Tibial artery (tissue), 4 donors: ENCODE measurements at regions of chr3 and their contacts with region 1.

Region 1: DNA sequence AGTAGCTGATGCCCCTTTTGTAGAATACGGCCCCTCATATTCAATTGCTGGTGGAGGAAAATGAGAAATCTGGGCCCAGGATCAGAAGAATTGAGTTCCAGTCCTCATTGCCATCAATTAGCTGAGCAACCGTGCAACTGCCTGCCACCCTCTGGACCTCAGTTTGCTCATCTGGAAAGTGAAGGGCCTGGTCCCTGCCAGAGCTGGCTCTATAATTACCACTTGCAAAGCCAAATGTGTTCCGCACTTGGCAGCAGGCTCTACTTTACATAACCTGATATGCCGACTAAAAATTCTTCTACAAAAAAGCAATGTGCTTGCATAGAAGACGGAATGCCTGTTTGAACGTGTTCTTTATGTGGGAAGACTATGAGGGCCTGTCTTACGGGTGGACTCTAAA is 8.6 kb upstream of the ITGB5 start:
- DNase-seq: peak in 1 of 2 donors; percentile 29
- H3K4me3 ChIP-seq: no peak overlapping the region
- H3K27ac ChIP-seq: peak overlapping the region; percentile 71 to 85
- H3K4me1 ChIP-seq: peaks cover 0 to 30% (median 15%) of the 10 kb centered on the region in 4 donors
- H3K27me3 ChIP-seq: no peaks in the 10 kb centered on the region
- CTCF ChIP-seq: no peak

Region 2: GRCh38 chr3:124780761-124781475 is 114.8 kb before region 1 on chr3:
- intact Hi-C with region 1: loop called (anchors 5 kb)
- DNase-seq: peak; percentile 89 to 93
- H3K4me3 ChIP-seq: peak overlapping the region; percentile 8 to 18
- H3K27ac ChIP-seq: peak overlapping the region; percentile 93 to 96
- H3K4me1 ChIP-seq: peaks cover 0 to 90% (median 72%) of the 10 kb centered on the region in 4 donors
- H3K27me3 ChIP-seq: no peaks in the 10 kb centered on the region
- CTCF ChIP-seq: no peak

Region 3: DNA sequence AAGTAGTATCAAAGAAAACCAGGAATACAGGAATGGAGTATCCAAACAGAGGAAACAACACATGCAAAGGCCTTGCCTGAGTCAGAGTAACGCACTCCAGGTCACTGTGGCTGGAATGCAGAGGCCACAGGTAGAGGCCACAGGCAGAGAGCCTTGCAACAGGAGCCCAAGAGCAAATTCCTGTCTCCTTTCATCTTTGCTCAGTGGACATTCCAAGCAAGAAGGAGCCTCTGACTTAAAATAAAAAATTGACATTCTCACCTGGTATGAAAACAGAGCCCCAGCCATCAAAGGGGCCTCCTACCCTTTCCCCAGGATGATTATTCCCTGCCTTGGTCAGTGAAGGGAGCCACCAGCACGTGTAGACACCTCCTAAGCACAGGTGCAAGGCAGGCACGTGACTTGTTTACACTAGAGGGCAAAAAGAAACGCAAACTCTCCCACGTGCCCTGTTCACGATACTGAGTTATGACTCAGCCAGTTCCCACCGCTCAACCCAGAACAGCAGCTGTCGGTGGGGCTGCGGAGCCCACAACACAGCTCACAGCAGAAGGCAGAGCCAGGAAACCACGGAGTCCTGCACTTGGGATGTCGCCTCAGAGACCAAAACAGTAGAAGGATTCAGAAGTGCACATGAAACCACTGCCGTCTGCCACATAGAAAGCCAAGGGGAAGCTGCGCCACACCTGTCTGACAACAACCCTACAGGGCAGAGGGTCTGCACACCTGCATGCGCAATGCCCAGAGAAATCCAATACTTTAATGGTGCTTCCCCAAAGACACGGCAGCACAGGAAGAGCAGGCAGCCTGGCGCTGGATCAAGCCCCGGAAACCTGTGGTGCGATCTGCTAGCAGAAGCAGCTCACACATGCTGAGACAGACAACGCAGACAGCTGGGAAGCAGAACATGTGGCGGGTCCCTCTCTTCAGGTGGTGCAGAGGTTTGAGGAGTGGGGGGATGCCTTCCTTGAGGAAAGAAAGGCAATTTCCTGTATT is 60.7 kb before region 1 on chr3:
- intact Hi-C with region 1: no loop called
- DNase-seq: peak; percentile 44 to 79
- H3K4me3 ChIP-seq: peak overlapping the region in 1 of 2 donors; percentile 8
- H3K27ac ChIP-seq: peak overlapping the region; percentile 78 to 85
- H3K4me1 ChIP-seq: peaks cover 4 to 98% (median 77%) of the 10 kb centered on the region in 4 donors
- H3K27me3 ChIP-seq: no peaks in the 10 kb centered on the region
- CTCF ChIP-seq: no peak

Region 4: DNA sequence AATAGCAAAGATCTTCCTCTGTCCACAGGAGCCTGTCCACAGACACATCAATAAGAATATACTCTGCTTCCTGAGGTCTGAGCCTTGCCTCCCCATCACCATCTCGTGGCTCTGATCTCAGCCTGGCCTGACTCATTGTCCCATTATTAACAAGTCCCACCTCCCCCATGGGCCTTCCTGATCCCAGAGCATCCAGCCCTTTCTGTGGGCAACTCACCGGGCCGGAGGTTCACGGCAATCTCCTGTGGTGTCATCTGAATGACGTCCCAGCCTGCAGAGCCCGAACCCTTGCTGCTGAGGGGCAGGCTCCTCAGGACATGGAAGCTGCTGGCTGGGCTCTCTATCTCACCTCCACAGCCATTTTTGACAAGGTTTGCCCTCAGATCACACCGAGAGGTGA is 36.7 kb before region 1 on chr3:
- intact Hi-C with region 1: no loop called
- DNase-seq: no peak
- H3K4me3 ChIP-seq: no peak overlapping the region
- H3K27ac ChIP-seq: peak overlapping the region; percentile 69 to 73
- H3K4me1 ChIP-seq: peaks cover 0 to 67% (median 31%) of the 10 kb centered on the region in 4 donors
- H3K27me3 ChIP-seq: no peaks in the 10 kb centered on the region
- CTCF ChIP-seq: no peak